ENCODE measurements at regions of chr9 and their contacts with region 1.

Region 1: DNA sequence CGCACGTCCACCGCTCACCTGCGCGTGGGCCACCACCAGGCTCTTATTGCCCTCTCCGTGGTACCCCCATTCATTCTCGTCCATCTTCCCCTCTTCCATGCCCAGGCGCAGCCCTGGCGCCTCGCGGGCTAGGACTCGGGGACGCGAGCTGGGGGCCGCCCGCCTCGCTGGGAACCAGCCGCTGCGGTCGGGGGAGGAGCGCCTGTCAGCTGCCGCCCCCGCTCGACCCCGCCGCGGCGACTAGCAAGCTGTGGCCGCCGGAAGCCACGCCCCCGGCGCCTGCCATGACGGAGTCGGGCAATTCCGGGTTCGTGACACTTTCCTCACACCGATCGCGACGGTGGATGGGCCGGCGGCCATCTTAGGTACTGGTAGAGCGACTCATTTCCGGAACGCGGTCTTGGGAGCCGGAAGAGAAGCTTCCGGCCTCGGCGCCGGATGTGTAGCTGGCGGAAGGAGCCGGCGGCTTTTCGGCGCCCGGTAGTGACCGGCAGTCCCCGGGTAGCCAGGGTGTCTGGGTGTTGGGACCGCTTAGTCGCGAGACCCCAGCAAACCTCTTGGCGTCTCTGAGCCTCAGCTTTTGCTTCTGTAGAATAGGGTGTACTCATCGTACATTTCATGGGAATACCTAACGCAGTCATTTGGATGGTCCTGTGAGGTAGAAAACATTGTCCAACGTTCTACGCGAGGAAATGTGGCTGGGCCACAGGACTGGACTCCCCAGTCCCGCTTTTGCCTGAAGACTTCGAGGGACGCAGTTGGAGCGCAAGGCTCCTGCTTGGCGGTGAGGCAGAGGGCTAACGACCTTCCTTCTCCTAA is at the start of gene IPPK:
- DNase-seq: peak; percentile 93 to 98 (median 97)
- ATAC-seq: peak; percentile 93 to 95
- H3K4me3 Mint-ChIP-seq: peak within 1 kb of the TSS; percentile 87 to 98 (median 96)
- H3K27ac Mint-ChIP-seq: peak within 1 kb of the TSS; percentile 93 to 98 (median 98)
- H3K4me1 Mint-ChIP-seq: peaks cover 17 to 50% (median 39%) of the 10 kb centered on the region in 4 donors
- H3K27me3 Mint-ChIP-seq: no peaks in the 10 kb centered on the region
- polyA plus RNA-seq, gene IPPK: 4.4 to 8.5 (median 5.1) TPM

Region 2: GRCh38 chr9:92325269-92325990 is 344.7 kb before region 1 on chr9 and contains the starts of genes CENPP and NOL8:
- POLR2A ChIA-PET with region 1: interaction called, 17 read pairs
- DNase-seq: peak; percentile 70 to 94 (median 81)
- ATAC-seq: peak; percentile 94 to 95
- H3K4me3 Mint-ChIP-seq: peak within 1 kb of the TSS; percentile 97 to 100 (median 99)
- H3K27ac Mint-ChIP-seq: peak within 1 kb of the TSS; percentile 97 to 100 (median 99)
- H3K4me1 Mint-ChIP-seq: peaks cover 8 to 36% (median 32%) of the 10 kb centered on the region in 4 donors
- H3K27me3 Mint-ChIP-seq: no peaks in the 10 kb centered on the region
- polyA plus RNA-seq, gene CENPP: 2.4 to 5.2 (median 3.0) TPM
- polyA plus RNA-seq, gene NOL8: 15.0 to 29.1 (median 26.7) TPM

Region 3: DNA sequence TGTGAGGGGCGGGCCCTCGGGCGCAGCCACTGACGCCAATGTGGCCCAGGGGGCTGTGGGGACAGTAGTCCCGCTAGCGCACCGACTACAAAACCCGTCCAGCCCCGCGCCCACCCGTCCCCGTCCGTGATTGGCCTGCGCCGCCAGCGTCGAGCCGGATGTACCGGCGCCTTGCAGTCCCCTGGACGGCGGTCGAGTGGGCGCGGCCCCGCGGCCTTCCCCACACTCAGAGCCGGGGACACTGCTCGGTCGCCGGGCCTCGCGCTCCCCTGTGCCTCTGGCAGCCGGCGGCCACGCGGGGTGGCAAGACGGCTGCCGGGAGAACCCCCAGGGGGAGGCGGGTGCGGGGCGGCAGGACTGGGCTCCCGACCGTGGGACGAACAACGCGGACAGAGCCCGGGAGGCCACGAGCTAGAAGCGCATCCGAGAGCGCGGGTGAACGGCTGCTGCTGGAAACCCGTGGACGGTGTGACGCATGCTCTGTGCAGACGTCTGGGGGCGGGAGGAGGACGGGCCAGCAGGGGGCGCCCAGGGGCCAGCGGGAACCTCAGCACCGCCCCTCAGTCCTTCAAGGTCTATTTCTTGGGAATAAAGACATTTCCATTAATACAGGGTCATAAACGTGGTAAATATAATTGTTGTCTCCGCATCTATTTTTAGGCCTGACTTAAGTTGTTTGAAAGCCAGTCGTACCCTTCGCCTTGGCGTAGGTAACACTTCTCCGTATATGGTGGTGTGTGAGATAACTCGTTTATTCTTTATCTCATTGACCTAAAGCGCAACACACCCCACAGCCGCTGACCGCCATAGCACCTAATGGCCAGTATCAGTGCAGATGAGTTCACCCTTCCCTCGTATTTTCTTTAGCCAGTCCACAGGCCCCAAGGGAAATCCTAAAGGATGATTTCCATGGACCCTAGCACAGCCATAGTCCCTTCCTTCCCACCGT is 95.2 kb after region 1 on chr9:
- POLR2A ChIA-PET with region 1: interaction called, 10 read pairs
- DNase-seq: peak; percentile 94 to 99 (median 98)
- ATAC-seq: peak; percentile 90 to 91
- H3K4me3 Mint-ChIP-seq: peak overlapping the region; percentile 77 to 95 (median 90)
- H3K27ac Mint-ChIP-seq: peak overlapping the region; percentile 92 to 99 (median 98)
- H3K4me1 Mint-ChIP-seq: peaks cover 33 to 67% (median 49%) of the 10 kb centered on the region in 4 donors
- H3K27me3 Mint-ChIP-seq: no peaks in the 10 kb centered on the region

Measured in naive thymus-derived CD8-positive, alpha-beta T cell (primary cell).